ENCODE measurements at regions of chr4 and their contacts with region 1.

Region 1: GRCh38 chr4:77385124-77385969 is 220.3 kb upstream of the CXCL13 start:
- DNase-seq: peak in 2 of 3 donors; percentile 56 to 75
- ATAC-seq: peak; percentile 90
- H3K4me3 ChIP-seq: no peak overlapping the region
- H3K4me1 ChIP-seq: no peaks in the 10 kb centered on the region
- CTCF ChIP-seq: peak; percentile 57

Region 2: DNA sequence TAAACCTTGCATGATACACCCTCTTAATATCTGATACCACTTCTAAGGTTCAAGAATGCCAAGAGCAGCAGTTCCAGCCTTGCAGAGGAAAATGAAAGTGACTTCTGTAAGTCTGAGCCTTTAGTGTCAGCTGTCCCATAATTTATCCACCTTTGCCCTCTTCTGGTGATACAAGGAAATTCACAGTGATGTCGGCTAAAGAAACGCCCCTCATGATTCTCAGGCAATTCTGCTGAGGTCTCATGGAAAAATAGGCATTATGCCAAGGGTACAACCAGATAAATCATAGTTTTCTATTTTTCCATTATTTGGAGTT is 48.0 kb after region 1 on chr4:
- intact Hi-C with region 1: loop called in 1 of 2 experiments (anchors 2 kb)
- DNase-seq: peak in 1 of 3 donors; percentile 51
- ATAC-seq: peak; percentile 89
- H3K4me3 ChIP-seq: no peak overlapping the region
- H3K4me1 ChIP-seq: no peaks in the 10 kb centered on the region
- CTCF ChIP-seq: no peak

Region 3: GRCh38 chr4:77443941-77444340 is 58.6 kb after region 1 on chr4:
- intact Hi-C with region 1: no loop called
- DNase-seq: no peak
- ATAC-seq: no peak
- H3K4me3 ChIP-seq: no peak overlapping the region
- H3K4me1 ChIP-seq: no peaks in the 10 kb centered on the region
- CTCF ChIP-seq: no peak

Region 4: DNA sequence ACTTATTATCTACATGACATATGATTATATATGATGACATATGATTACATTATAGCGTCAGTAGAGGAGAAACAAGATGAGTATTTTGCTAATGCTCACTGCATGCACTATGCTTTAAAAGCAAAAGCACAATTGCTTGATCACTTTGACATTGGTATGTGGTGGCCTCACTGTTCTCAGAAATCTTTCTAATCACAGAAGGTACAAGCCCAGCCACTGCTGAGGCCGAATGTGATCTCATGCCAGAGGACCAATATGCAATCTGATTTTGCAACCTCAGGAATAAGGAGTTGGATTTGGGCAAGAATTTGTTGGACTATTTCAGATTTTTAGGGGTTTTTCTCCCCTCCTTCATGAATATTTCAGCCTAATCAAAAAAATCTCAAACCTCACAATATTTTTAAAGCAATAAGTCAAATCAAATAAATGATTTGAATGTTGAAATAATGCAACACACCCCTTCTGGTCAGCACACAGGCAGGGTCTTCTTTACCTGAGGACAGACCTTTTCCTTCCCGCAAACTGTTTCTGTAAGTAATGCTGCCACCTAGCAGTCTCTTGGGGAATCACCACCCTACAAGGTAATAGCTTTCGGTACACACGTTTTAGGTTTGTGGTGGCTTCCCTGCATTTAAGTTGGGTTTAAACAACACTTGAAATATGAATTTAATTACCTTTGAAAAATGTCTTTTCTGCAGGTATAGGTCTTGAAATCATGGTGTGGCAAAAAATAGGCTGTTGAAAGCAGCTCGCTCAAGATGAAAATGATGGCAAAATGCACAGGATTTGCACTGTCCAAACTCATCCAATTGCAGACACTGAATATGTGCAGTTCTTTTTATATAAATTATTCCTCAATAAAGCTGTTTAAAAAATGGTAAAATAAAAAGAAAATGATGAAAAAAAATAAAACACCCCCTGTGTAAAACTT is 215.4 kb after region 1 on chr4:
- intact Hi-C with region 1: loop called in 1 of 2 experiments (anchors 10 kb)
- DNase-seq: peak in 1 of 3 donors; percentile 50
- ATAC-seq: peak; percentile 66
- H3K4me3 ChIP-seq: no peak overlapping the region
- H3K4me1 ChIP-seq: no peaks in the 10 kb centered on the region
- CTCF ChIP-seq: peak; percentile 60

Region 5: DNA sequence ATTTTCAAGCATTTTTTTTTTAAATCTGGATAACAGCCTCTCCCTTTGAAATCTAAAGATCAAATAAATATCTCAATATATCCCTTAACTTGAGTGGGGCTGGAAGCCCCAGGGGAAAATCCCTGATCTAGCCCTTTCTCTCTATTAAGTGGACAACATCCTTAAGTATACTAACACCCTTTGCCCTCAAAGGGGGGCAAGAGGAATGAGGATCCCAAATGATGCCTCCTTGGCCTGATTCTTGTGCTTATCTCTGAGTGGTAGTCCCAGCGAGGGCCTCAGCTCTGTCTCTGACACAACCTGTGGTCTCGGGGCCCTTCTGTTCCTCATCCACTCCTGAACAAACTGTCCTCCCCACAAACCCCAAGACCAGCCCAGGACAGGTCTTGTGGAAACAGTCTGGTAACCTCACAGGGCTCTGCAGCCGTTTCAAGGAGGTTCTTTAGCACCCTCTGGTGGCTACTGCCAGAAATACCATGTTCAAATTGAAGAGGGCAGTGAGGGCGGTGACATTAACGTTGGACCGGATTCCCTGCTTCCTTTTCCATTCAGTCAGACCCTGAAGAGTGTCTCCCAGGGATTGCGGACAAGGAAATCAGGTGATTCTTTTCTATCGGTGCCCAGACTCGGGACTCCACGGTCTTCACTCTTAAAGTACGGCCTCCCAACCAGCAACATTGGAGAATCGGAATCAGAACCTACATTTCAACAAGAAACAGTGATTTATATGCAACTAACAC is 233.2 kb after region 1 on chr4:
- intact Hi-C with region 1: loop called in 1 of 2 experiments (anchors 10 kb)
- DNase-seq: peak in 2 of 3 donors; percentile 45 to 85
- ATAC-seq: peak; percentile 99
- H3K4me3 ChIP-seq: no peak overlapping the region
- H3K4me1 ChIP-seq: no peaks in the 10 kb centered on the region
- CTCF ChIP-seq: peak; percentile 64